Gastrocnemius medialis (tissue), 4 donors: ENCODE measurements at regions of chrX and their contacts with region 1.

Region 1: DNA sequence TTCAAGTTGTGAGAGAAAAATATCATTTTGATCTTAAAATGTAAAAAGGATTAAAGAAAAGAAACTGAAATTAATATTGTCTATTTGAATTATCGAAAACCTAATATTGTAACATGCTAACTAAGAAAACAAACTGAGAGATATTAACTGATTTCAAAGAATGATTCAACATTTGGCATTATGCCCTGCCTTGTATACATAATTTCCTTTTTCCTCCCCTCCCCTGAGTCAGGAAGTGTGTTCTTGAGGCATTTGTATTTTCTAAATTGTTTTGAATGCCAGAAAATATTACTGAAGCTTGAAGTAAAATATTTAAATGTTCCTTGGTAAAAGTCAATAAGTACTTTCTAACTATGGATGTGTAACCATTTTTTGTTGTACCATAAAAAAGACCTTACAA is 49.4 kb downstream of the RPS6KA3 start:
- DNase-seq: no peak
- ATAC-seq: no peak
- H3K4me3 ChIP-seq: peak overlapping the region; percentile 32 to 42 (median 36)
- H3K27ac ChIP-seq: peak overlapping the region; percentile 68 to 86 (median 75)
- H3K4me1 ChIP-seq: peaks cover 8 to 29% of the 10 kb centered on the region in 2 donors
- H3K27me3 ChIP-seq: no peaks in the 10 kb centered on the region
- CTCF ChIP-seq: no peak
- POLR2A ChIP-seq: no peak

Region 2: GRCh38 chrX:19728915-19729314 is 488.4 kb before region 1 on chrX:
- in situ Hi-C with region 1: no loop called
- intact Hi-C with region 1: no loop called
- DNase-seq: no peak
- ATAC-seq: no peak
- H3K4me3 ChIP-seq: no peak overlapping the region
- H3K27ac ChIP-seq: no peak overlapping the region
- H3K4me1 ChIP-seq: no peaks in the 10 kb centered on the region
- H3K27me3 ChIP-seq: no peaks in the 10 kb centered on the region
- CTCF ChIP-seq: no peak
- POLR2A ChIP-seq: no peak

Region 3: DNA sequence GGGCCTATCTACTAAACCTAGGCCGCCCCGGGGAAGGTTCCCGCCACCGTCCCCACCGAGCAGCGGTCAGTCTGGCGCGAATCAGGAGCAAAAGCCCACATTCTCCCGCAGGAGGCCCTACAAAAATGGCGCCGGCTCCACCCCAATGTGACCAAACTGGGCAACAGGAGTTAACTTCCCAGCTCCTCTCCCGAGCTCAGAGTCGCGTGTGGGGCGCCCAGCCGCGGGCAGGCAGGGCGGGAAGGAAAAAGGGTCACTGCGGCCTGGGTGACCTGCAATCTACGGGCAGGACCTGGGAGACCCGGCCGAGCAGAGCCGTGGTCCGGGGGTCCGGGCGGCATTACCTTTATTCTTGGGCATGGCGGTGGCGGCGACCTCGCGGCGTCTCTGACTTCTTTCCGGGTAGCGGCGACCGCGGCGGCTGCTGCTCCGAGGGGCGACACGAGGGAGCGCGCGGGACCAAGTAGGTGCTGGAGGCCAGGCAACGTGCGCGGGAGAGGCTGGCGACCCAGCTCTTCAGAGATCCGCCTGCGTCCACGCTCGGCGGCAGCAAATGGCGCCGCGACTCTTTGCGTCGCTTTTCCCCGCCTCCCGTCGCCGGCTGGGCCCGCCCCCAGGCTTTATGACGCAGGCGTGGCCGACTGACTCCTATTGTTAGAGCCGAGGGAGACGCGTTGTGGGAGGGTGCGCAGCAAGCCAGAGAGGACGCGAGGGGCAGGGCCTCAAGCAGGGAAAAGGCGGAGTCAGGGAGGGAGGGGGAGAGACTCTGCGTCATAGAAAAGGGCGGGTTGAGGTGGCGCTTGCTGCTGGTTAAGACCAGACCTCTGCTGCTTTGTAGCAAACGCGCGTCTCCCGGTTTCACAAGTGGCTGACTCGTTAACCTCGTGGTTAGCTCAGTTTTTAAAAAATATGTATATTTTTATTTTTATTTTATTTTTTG is 75.7 kb before region 1 on chrX and contains the start of gene EIF1AX:
- in situ Hi-C with region 1: no loop called
- intact Hi-C with region 1: loop called (anchors 5 kb)
- DNase-seq: peak; percentile 94 to 97
- ATAC-seq: peak; percentile 97
- H3K4me3 ChIP-seq: peak within 1 kb of the TSS; percentile 71 to 98 (median 90)
- H3K27ac ChIP-seq: peak within 1 kb of the TSS; percentile 92 to 97 (median 95)
- H3K4me1 ChIP-seq: peaks cover 13 to 21% of the 10 kb centered on the region in 2 donors
- H3K27me3 ChIP-seq: no peaks in the 10 kb centered on the region
- CTCF ChIP-seq: no peak
- POLR2A ChIP-seq: peak; percentile 97 to 98
- total RNA-seq, gene EIF1AX: 61.0 to 124 (median 88.9) TPM

Region 4: GRCh38 chrX:20315140-20315539 is 97.9 kb after region 1 on chrX:
- in situ Hi-C with region 1: no loop called
- intact Hi-C with region 1: loop called (anchors 10 kb)
- DNase-seq: no peak
- ATAC-seq: peak in 1 of 2 donors; percentile 46
- H3K4me3 ChIP-seq: no peak overlapping the region
- H3K27ac ChIP-seq: peak overlapping the region; percentile 22 to 83 (median 51)
- H3K4me1 ChIP-seq: peaks cover 10 to 13% of the 10 kb centered on the region in 2 donors
- H3K27me3 ChIP-seq: no peaks in the 10 kb centered on the region
- CTCF ChIP-seq: no peak
- POLR2A ChIP-seq: no peak